Activated CD4-positive, alpha-beta T cell treated with anti-CD3 and anti-CD28 coated beads for 36 hours (primary cell): ENCODE measurements at regions of chr17 and their contacts with region 1.

Region 1: DNA sequence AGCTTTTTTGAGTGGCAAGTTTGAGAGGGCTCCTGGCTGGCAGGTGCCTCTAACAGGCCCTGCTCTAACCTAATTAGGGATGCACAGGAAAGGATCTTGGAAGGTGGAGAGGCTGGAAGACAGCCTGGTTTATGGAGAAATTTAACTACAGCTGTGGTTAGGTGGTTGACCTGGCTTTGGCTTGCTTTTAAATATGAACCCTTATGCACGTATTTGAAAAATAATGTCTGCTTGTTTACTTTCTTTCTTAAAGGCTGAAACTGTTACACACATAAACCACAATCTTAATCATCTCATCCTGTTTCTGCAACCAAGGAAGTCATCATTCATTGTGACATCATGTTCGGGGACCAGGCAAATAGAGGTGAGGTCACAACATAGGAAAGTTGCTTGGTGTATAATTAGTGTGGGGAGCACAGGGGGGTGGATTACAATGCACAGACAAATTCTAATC is 23.1 kb upstream of the DHRS13 start:
- DNase-seq: peak; percentile 51
- ATAC-seq: peak; percentile 84
- H3K4me3 Mint-ChIP-seq: peak overlapping the region; percentile 36
- H3K27ac Mint-ChIP-seq: peak overlapping the region; percentile 88
- H3K4me1 Mint-ChIP-seq: peaks cover 59% of the 10 kb centered on the region
- H3K27me3 Mint-ChIP-seq: no peaks in the 10 kb centered on the region

Region 2: GRCh38 chr17:28892024-28892423 is 33.9 kb before region 1 on chr17:
- CTCF ChIA-PET with region 1: no interaction called
- POLR2A ChIA-PET with region 1: no interaction called
- intact Hi-C with region 1: loop called in 1 of 2 experiments (anchors 2 kb)
- DNase-seq: no peak
- ATAC-seq: no peak
- H3K4me3 Mint-ChIP-seq: no peak overlapping the region
- H3K27ac Mint-ChIP-seq: peak overlapping the region; percentile 55
- H3K4me1 Mint-ChIP-seq: peaks cover 59% of the 10 kb centered on the region
- H3K27me3 Mint-ChIP-seq: no peaks in the 10 kb centered on the region

Region 3: GRCh38 chr17:28908640-28909167 is 17.2 kb before region 1 on chr17:
- CTCF ChIA-PET with region 1: interaction called, 20 read pairs
- POLR2A ChIA-PET with region 1: interaction called, 3 read pairs
- intact Hi-C with region 1: no loop called
- DNase-seq: no peak
- ATAC-seq: no peak
- H3K4me3 Mint-ChIP-seq: no peak overlapping the region
- H3K27ac Mint-ChIP-seq: peak overlapping the region; percentile 6
- H3K4me1 Mint-ChIP-seq: no peaks in the 10 kb centered on the region
- H3K27me3 Mint-ChIP-seq: no peaks in the 10 kb centered on the region

Region 4: DNA sequence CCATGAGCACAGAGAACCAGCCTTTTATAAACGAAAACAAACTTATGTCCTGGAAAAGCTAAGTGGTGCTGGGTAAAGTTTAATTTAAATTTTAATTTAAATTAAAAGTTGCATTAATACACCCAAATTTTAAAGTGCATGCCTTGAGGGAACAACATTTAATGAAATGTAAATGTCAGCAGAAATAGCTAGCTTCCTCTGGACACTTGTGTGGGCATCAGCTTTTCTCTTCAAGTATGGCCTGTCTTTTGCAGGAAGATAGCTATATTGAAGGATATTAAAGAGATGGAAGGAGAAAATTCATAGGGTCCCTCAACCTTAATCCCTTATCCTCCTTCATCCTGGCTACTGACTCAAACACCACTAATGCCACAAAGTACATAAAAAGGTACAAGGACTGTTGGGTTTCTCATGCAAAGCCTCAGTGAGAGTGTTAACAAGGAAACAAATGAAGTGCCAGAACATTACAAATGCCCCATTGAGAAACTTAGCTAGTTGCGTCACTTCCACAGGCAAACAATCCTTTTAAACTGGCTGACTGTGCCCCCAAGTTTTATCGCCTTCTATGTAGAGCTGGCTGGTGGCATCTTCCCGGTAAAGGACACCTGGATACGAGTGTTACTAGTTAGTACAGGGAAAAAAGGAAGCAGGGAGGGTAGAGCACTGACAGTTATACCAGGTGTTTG is 11.2 kb after region 1 on chr17:
- CTCF ChIA-PET with region 1: interaction called, 8 read pairs
- POLR2A ChIA-PET with region 1: no interaction called
- intact Hi-C with region 1: loop called in 1 of 2 experiments (anchors 2 kb)
- DNase-seq: no peak
- ATAC-seq: no peak
- H3K4me3 Mint-ChIP-seq: no peak overlapping the region
- H3K27ac Mint-ChIP-seq: no peak overlapping the region
- H3K4me1 Mint-ChIP-seq: peaks cover 76% of the 10 kb centered on the region
- H3K27me3 Mint-ChIP-seq: no peaks in the 10 kb centered on the region

Region 5: DNA sequence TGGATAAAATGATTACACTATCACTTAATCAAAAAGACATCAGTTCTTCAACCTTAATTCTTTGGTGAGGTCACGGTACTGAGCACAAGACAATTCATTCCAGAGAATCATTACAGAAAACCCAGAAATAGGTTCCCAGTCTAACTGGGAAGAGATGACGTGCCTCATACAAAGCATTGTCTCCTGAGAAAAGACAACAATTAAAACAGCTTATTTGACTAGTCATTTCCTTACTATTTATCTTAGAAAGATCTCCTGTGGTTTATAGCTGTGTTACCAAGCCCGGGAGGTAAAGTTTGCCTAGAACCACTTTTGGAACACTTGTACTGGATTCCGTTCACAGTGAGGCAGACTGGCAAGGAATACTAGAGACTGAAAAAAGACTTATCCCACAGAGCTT is 20.3 kb after region 1 on chr17:
- CTCF ChIA-PET with region 1: interaction called, 26 read pairs
- POLR2A ChIA-PET with region 1: interaction called, 5 read pairs
- intact Hi-C with region 1: loop called (anchors 1 to 2 kb)
- DNase-seq: no peak
- ATAC-seq: peak; percentile 5
- H3K4me3 Mint-ChIP-seq: peak overlapping the region; percentile 56
- H3K27ac Mint-ChIP-seq: peak overlapping the region; percentile 87
- H3K4me1 Mint-ChIP-seq: peaks cover 68% of the 10 kb centered on the region
- H3K27me3 Mint-ChIP-seq: no peaks in the 10 kb centered on the region

Region 6: GRCh38 chr17:29103341-29103740 is 177.4 kb after region 1 on chr17:
- CTCF ChIA-PET with region 1: no interaction called
- POLR2A ChIA-PET with region 1: no interaction called
- intact Hi-C with region 1: no loop called
- DNase-seq: no peak
- ATAC-seq: no peak
- H3K4me3 Mint-ChIP-seq: no peak overlapping the region
- H3K27ac Mint-ChIP-seq: no peak overlapping the region
- H3K4me1 Mint-ChIP-seq: peaks cover 11% of the 10 kb centered on the region
- H3K27me3 Mint-ChIP-seq: no peaks in the 10 kb centered on the region